ENCODE measurements at regions of chr3 and their contacts with region 1.

Region 1: GRCh38 chr3:184185461-184186308 is at the start of gene ABCF3:
- DNase-seq: peak; percentile 98
- H3K4me3 ChIP-seq: peak within 1 kb of the TSS; percentile 100
- H3K27ac ChIP-seq: peak within 1 kb of the TSS; percentile 79
- H3K27me3 ChIP-seq: no peaks in the 10 kb centered on the region
- CTCF ChIP-seq: no peak
- polyA plus RNA-seq, gene ABCF3: 43.1 and 50.0 TPM in 2 replicates

Region 2: DNA sequence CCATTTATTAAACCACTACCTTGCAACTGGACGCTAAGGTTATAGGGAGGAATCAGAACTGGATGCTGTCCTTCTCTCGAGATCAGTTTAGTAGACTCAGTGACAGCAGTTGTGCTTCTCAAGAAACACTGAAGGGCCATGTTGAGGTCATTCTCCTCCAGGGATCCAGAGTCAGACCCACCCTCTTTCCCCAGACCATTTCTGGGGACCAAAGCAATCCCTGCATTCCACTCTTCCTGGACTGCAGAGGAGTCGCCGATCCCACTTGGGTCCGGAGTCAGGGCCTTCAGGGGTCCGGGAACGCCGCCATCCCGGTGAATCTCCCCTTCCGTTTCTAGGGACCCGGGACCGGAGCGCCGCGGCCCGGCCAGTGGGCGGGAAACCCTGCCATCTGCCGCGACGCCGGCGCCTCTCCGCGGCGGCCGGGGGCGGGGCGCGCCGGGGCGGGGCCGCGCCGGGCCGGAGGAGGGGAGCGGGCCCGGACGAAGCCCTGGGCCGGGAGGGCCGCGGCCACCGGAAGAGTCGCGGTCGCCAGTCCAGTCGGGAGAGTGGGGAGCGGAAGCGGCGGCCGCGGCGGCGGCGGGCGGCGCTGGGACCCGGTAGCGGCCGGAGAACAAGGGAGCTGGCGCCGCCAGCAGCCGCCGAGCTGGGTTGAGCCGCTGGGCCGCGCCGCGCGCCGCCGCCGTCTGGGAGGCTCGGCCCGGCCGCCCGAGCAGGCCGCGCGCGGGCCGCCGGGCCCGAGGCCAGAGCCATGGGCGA is 30.6 kb before region 1 on chr3 and contains the start of gene DVL3:
- CTCF ChIA-PET with region 1: no interaction called
- POLR2A ChIA-PET with region 1: interaction called, 11 read pairs
- DNase-seq: no peak
- H3K4me3 ChIP-seq: peak within 1 kb of the TSS; percentile 97
- H3K27ac ChIP-seq: peak within 1 kb of the TSS; percentile 68
- H3K27me3 ChIP-seq: no peaks in the 10 kb centered on the region
- CTCF ChIP-seq: no peak
- polyA plus RNA-seq, gene DVL3: 29.7 and 37.8 TPM in 2 replicates

Measured in AG04450 (cell line).